Transverse colon (tissue), 4 donors: ENCODE measurements at regions of chr2 and their contacts with region 1.

Region 1: DNA sequence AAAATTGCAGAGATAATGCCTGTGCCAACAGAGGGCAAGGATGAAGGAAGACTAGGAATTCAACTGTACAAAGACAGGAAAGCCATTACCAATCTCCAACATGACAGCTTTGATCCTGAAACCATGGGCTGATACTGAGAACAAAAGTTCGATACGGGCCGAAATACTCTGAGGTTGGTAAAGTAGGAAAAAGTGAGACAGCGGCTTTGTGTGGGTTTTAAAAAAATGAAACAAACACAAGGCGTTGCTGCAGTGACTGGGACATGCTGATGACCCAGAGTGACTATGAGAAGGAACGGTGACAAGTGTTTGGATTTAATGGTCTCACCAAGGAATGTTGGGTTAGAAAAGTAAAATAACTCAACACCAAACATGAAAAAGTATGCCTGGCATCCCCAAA is 24.2 kb upstream of the SDC1 start:
- DNase-seq: no peak
- H3K4me3 ChIP-seq: no peak overlapping the region
- H3K27ac ChIP-seq: no peak overlapping the region
- H3K4me1 ChIP-seq: no peaks in the 10 kb centered on the region
- H3K27me3 ChIP-seq: no peaks in the 10 kb centered on the region
- CTCF ChIP-seq: no peak
- EP300 ChIP-seq: no peak
- POLR2A ChIP-seq: no peak

Region 2: DNA sequence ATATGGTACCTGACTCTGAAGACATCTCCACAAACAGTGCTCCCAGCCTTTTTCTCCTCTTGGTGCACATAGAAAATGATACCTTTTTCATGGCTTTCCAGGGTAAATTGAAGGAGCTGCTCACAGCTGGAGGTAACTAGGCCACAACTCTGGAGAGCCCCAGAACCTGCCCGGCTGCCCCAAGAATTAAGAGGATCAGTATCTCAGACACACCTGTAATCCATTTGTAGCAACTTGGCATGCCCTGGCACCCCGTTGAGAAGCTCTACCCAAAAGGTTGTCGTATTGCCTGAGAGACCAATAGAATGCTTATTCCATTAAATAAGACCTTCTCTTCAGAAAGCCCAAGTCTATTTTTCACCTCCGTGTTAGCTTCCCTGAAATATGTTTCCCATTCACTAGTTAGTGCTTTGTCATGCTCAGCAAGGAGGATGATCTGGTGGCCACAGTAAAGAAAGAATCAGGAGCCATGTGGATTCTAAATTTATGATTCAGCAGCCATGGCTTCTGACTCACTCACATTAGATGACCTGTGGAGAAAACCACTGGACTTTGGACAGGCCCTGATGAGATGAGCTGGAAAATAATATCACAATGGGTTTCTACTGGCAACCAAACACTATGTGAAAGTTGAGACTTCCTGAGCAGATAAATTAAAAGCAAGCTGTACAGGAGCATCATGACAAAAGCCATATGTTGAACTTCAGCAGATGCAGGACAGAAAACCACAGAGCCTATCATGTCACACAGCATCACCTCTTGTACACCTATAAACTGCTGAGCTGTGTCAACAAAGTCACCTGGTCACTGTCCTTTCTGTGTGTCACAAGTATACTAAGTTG is 637.5 kb before region 1 on chr2:
- in situ Hi-C with region 1: no loop called
- intact Hi-C with region 1: no loop called
- DNase-seq: peak; percentile 10
- H3K4me3 ChIP-seq: no peak overlapping the region
- H3K27ac ChIP-seq: no peak overlapping the region
- H3K4me1 ChIP-seq: no peaks in the 10 kb centered on the region
- H3K27me3 ChIP-seq: no peaks in the 10 kb centered on the region
- CTCF ChIP-seq: no peak
- EP300 ChIP-seq: no peak
- POLR2A ChIP-seq: no peak

Region 3: DNA sequence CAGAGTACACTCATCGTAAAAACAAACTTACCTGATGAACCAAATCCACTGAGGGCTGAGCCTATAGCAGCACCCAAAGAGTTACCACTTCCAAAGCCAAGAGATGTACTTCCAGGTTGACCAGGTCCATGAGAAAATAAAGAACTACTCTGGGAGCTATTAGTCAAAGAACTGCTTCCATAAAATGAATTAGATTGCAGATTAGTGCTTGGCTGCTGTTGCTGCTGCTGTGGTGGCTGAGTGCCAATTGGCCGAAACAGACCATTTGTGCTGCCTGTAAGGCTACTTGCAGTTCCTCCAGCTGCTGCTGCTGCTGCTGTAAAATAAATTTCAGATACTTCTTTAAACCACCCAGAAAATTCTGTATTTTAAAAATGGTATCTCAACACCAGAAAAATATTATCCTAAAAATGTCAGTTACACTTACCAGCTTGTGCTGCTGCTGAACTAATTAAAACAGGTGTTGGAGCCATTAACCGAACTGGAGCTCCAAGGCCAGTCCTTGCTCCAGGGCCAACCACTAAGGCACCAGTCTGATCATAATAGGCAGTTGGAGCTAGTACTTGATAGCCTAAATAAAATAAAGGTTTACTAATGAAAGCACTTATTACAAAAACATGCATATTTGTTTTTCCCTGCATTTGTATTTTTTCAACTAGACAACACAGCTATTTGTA is 33.9 kb after region 1 on chr2:
- in situ Hi-C with region 1: no loop called
- intact Hi-C with region 1: loop called (anchors 2 kb)
- DNase-seq: peak; percentile 37
- H3K4me3 ChIP-seq: no peak overlapping the region
- H3K27ac ChIP-seq: no peak overlapping the region
- H3K4me1 ChIP-seq: peaks cover 0 to 8% (median 1%) of the 10 kb centered on the region in 4 donors
- H3K27me3 ChIP-seq: no peaks in the 10 kb centered on the region
- CTCF ChIP-seq: no peak
- EP300 ChIP-seq: no peak
- POLR2A ChIP-seq: no peak